ENCODE measurements at regions of chr1 and their contacts with region 1.

Region 1: GRCh38 chr1:187103354-187103753 is 274.6 kb downstream of the PLA2G4A start:
- DNase-seq: no peak
- ATAC-seq: no peak
- H3K4me3 ChIP-seq: no peak overlapping the region
- H3K4me3 Mint-ChIP-seq: no peak overlapping the region
- H3K27ac ChIP-seq: no peak overlapping the region
- H3K27ac Mint-ChIP-seq: no peak overlapping the region
- H3K4me1 ChIP-seq: no peaks in the 10 kb centered on the region
- H3K4me1 Mint-ChIP-seq: peaks cover 0 to 8% (median 2%) of the 10 kb centered on the region in 7 donors
- H3K27me3 ChIP-seq: no peaks in the 10 kb centered on the region
- H3K27me3 Mint-ChIP-seq: no peaks in the 10 kb centered on the region

Region 2: GRCh38 chr1:186985889-186986491 is 117.4 kb before region 1 on chr1:
- CTCF ChIA-PET with region 1: no interaction called
- POLR2A ChIA-PET with region 1: no interaction called
- intact Hi-C with region 1: no loop called
- DNase-seq: peak in 5 of 9 donors; percentile 25 to 39 (median 36)
- ATAC-seq: peak; percentile 58
- H3K4me3 ChIP-seq: no peak overlapping the region
- H3K4me3 Mint-ChIP-seq: no peak overlapping the region
- H3K27ac ChIP-seq: no peak overlapping the region
- H3K27ac Mint-ChIP-seq: no peak overlapping the region
- H3K4me1 ChIP-seq: no peaks in the 10 kb centered on the region
- H3K4me1 Mint-ChIP-seq: no peaks in the 10 kb centered on the region
- H3K27me3 ChIP-seq: no peaks in the 10 kb centered on the region
- H3K27me3 Mint-ChIP-seq: peaks cover 0 to 23% (median 3%) of the 10 kb centered on the region in 5 donors

Region 3: GRCh38 chr1:187121661-187122060 is 18.3 kb after region 1 on chr1:
- CTCF ChIA-PET with region 1: no interaction called
- POLR2A ChIA-PET with region 1: no interaction called
- intact Hi-C with region 1: loop called in 1 of 2 experiments (anchors 2 kb)
- DNase-seq: no peak
- ATAC-seq: no peak
- H3K4me3 ChIP-seq: no peak overlapping the region
- H3K4me3 Mint-ChIP-seq: no peak overlapping the region
- H3K27ac ChIP-seq: no peak overlapping the region
- H3K27ac Mint-ChIP-seq: no peak overlapping the region
- H3K4me1 ChIP-seq: no peaks in the 10 kb centered on the region
- H3K4me1 Mint-ChIP-seq: no peaks in the 10 kb centered on the region
- H3K27me3 ChIP-seq: no peaks in the 10 kb centered on the region
- H3K27me3 Mint-ChIP-seq: no peaks in the 10 kb centered on the region